Prostate gland (tissue), 2 donors: ENCODE measurements at regions of chr11 and their contacts with region 1.

Region 1: DNA sequence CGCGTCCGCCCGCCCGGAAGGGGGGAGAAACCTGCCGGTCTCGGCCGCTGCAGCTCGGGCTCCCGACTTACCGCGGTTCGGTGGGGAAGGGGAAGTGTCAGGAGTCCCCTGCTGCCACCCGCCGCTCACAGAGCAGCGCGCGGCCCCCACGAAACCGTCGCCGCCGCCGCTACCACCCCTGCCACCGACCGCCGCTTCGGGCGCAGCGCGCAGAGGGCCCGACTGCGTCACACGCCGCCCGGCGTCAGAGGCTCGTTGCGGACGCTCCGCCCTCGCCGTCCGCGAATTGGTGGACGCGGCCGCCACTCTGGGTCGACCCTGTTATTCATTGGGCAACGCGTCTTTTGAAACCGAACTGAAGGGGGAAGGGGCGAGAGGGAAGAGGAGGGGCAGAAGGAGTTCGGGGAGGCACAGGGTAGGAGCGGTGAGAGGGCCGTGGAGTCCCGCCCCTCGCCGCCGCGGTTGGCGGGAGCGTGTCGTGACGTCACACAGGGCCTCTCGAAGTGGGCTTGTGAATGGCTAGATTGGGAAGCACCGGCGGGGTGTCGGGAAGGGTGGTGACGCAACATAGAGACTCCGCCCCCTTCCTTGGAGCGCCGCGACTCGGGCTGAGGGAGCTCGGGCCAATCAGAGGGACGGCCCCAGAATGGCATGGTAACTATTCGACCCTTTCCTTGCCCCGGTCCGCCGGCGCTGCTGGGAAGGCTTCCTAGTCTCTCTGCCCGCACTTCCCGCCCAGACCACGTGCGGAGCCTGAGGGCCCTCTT is at the start of gene NUP98:
- DNase-seq: peak; percentile 100
- H3K4me3 ChIP-seq: peak within 1 kb of the TSS; percentile 63 to 100
- H3K27ac ChIP-seq: peak within 1 kb of the TSS; percentile 94 to 98
- H3K4me1 ChIP-seq: no peaks in the 10 kb centered on the region
- H3K27me3 ChIP-seq: no peaks in the 10 kb centered on the region
- CTCF ChIP-seq: peak in 1 of 4 experiments; percentile 8
- POLR2A ChIP-seq: peak; percentile 100
- total RNA-seq, gene NUP98: 127 to 136 TPM

Region 2: DNA sequence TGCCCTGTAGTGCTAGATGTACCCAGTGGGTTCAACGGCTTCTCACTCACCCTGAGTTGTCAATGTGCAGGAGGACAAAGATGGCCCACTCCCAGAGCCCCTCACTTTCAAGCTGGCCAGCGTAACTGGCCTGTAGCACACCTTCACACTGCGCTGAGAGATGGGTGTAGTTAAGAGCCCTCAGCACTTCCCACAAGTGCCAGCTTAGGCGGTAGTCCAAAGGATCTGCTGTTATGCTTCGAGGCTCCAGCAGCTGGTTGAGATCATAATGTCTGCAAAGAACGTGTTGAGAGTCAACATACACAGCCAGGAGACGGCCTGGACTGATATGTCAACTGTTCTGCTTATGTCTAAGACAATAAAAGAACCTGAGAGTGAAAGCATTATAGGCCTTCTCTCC is 111.6 kb before region 1 on chr11:
- intact Hi-C with region 1: no loop called
- DNase-seq: peak; percentile 15
- H3K4me3 ChIP-seq: no peak overlapping the region
- H3K27ac ChIP-seq: no peak overlapping the region
- H3K4me1 ChIP-seq: no peaks in the 10 kb centered on the region
- H3K27me3 ChIP-seq: no peaks in the 10 kb centered on the region
- CTCF ChIP-seq: no peak
- POLR2A ChIP-seq: no peak

Region 3: DNA sequence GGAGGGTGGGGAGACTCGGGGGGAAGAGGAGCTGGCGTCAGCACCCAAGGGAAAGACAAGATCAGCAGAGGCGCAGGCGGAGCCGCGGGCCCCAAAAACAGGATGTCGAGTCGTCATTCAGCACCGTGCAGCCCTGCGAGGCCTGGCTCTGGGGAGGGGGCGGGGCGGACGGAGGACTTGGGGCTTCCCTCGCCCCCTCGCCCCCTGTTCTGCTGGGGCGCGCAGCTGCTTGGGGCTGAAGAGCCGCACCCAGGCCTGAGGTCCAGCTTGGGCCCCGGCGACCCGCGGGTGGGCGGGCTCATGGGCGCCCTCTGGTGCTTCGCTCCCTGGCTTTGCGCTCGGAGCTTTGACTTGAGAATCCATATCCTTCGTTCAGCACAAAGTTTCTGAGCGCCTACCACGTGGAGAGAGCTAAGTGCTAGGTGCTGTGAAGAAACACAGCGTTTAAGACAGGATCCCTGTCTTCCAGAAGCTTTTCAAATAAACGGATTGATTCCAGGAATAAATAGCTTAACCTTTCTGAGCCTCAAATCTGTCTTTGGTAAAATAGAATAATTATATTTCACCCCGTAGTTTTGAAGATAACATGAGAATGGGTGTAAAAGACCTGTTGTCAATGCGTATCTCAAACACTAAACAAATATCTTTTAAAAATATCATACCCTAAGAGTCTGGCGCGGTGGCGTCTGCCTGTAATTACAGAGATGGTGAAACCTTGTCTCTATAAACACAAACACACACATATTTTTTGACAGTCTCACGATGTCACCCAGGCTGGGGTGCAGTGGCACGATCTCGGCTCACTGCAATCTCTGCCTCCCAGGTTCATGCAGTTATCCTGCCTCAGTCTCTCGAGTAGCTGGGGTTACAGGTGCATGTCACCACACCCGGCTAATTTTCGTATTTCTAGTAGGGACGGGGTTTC is 44.2 kb after region 1 on chr11:
- intact Hi-C with region 1: loop called (anchors 5 kb)
- DNase-seq: peak; percentile 82
- H3K4me3 ChIP-seq: peak overlapping the region; percentile 46 to 91
- H3K27ac ChIP-seq: peak overlapping the region; percentile 95 to 97
- H3K4me1 ChIP-seq: no peaks in the 10 kb centered on the region
- H3K27me3 ChIP-seq: no peaks in the 10 kb centered on the region
- CTCF ChIP-seq: peak; percentile 44 to 82 (median 68)
- POLR2A ChIP-seq: peak; percentile 36

Region 4: GRCh38 chr11:3854977-3855807 is 57.7 kb after region 1 on chr11 and contains the start of gene STIM1:
- intact Hi-C with region 1: no loop called
- DNase-seq: peak; percentile 92
- H3K4me3 ChIP-seq: peak within 1 kb of the TSS; percentile 92 to 97
- H3K27ac ChIP-seq: peak within 1 kb of the TSS; percentile 97 to 98
- H3K4me1 ChIP-seq: peaks cover 12% of the 10 kb centered on the region
- H3K27me3 ChIP-seq: no peaks in the 10 kb centered on the region
- CTCF ChIP-seq: peak; percentile 94 to 99 (median 98)
- POLR2A ChIP-seq: peak; percentile 72
- total RNA-seq, gene STIM1: 34.1 to 65.0 TPM

Region 5: GRCh38 chr11:3971756-3972404 is 174.4 kb after region 1 on chr11:
- intact Hi-C with region 1: no loop called
- DNase-seq: no peak
- H3K4me3 ChIP-seq: no peak overlapping the region
- H3K27ac ChIP-seq: no peak overlapping the region
- H3K4me1 ChIP-seq: no peaks in the 10 kb centered on the region
- H3K27me3 ChIP-seq: no peaks in the 10 kb centered on the region
- CTCF ChIP-seq: peak in 1 of 4 experiments; percentile 14
- POLR2A ChIP-seq: no peak